Cardiac septum (tissue), 1 donor: ENCODE measurements at regions of chr6 and their contacts with region 1.

Region 1: DNA sequence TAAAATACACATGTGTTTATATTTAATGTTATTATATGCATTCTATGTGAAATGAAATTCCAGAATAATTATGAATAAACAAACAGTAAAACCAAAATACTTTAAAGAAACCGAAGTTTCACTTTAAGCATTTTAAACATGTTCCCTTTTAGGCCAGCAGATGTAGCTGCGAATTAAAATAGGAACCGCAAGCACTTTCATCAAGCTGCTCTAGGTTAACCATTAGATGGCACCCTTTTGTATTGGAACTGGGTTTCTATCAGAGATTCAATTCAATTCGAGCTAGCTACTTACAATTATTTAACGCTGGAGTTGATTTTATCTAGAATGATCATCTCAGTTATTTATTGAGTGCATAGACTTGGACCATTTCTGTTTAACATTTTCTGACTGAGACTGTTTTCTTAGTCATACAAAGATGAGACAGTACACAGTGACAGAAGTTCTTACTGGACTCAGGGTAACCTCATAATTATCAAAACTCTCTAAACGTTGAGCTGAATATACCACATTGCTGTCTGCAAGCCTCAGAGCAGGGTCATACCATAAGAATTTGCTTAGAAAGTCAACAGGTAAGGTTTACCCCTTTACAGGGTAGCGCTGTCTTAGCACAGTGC is 8.5 kb downstream of the TMEM242 start:
- DNase-seq: no peak

Region 2: DNA sequence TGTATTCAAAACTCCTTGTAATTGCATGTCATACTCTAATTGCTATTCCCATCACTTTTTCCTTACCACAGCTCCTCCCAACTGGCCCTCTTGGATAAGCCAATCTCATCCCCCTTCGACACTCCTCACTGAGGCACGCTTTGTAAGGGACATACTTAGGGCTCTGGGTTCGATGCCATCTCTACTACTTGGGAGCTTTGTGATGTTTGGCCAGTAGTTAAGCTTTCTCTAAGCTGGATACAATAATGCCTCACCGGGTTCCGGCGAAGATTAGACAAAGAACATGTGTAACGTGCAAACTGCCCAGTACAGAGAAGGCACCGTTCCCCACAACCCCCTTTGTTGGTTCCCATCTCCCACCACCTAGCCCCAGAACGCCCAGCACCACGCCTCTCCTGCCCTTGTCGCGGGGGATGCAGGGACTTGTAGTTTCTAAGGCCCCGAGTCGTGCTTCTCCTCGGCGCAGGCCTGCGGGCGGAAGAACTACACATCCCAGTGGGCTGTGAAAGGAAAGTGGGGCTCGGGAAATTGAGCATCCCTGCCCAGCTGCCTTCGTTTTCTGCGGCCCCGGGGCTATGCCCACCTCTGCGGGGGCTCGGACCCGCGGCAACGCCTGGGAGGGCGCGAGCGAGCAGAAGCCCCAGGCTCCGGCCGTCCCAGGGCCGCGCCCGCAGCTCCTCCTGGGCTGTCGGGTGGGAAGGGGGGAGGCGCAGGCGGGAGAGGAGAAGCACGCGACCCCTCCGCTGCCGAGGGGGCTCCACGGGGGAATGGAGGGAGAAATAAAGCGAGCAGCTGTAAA is 65.0 kb after region 1 on chr6:
- intact Hi-C with region 1: loop called (anchors 2 kb)
- DNase-seq: peak; percentile 94

Region 3: DNA sequence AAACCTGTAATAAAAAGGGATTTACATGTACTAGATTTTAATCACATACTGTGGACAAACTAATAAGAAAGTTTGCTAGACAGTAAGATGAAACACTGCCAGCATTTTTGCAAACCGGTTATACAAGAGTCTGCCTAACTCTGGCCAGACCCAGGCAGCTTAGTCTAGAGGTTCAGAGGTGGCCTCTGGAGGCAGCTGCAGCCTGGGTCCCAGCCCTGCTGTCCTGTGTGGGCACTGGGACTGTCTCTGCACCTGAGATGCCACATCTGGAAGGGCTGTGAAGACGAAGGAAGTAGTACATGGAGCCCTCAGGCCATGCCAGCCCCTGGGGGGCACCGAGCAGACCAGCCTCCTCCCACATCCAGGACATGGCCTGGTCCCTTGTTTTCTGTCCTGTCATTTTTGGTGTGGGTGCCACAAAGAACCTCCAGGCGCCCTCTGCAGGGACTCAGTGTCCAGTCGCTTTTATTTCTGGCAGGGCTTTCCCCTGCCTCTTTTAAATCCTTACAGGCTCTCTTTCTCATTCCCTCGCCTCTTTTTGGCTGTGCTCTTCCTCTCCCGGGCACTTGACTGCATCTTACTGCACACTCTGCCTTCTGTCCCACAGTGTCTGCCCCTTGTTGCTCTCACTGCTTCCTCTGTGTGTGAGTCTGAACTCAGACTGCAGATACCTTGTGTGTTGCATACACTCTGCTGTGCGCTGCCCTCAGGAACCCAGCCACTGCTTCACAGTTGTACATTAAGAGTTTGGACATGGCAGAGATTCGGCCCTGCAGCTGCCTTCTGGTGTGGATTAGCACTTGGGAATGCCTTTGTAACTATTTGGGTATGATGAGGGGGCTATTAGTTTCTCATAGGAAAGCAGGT is 282.9 kb after region 1 on chr6:
- intact Hi-C with region 1: loop called (anchors 5 kb)
- DNase-seq: no peak

Region 4: DNA sequence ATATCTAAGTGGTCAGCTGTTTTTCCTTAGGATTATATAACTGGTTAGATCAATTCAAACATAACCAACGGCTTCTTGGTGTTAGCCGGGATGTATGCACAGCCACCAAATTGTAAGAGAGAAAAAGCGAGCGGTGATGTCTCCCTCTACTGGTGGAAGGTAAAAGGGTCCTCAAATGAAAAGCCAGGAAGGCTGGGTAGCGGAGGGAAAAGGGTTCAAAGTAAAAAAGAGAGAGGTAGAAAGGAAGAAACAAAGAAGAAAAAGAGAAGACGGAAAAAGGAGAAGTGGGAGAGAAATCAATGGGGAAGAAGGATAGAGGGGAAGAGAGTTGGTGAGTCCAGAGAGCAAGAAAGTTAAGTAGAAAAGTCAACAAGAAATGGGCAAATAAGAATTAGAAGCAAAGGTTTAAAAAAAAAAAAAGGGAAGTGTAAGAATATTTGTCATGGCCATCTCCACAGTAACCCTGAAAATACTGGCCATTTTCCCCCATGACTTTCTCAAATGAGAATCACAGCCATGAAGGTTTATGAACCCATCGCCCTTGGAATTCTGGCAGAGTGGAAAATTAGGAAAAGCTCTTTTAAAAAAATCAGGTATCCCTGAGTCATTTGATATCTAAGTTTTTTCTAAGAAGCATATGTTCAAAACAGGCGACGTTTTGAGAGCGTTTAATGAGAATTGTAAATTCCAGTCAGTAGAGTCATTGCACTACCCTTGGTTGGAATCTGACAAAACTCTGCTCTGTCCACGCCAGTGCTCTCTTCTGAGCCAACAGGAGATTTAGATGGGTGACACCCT is 352.6 kb after region 1 on chr6:
- intact Hi-C with region 1: loop called (anchors 2 kb)
- DNase-seq: peak; percentile 38

Region 5: DNA sequence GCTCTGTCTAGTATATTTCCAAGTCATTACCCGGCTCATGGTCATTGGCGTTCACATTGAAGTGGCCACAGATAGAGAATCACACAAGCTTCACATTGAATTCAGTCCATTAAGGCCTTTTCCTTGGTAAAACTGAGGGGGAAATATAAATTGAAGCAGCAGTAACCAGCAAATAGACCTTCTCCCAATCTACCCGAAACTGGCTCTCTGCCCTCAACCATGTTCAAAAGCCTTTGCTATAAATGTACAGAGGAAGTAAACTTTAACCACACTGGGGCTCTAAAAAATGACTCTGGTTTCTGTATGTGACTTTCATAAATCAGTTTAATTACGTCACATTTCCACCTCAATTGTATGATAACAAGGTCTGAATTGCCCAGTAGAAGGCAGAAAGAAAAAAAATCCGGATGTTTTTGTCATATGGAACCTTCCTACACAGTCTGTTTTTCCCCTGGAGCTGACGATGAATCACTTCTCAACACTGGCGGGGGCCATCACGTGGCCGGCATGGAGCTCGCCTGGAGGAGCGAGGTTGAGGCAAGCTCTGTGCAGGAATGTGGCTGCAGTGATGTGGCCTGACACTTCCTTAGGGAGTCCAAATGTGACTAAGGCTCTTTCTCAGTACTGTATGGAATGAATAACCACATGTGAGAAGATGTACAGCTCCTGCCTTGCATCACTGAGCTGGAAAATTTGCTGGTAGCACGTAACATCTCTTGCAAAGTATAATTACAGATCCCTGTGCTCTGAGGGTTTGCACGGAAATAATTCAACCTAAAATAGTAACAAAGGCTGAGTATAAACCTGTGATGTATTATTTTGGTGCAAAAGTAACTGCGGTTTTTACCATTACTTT is 449.6 kb after region 1 on chr6:
- intact Hi-C with region 1: loop called (anchors 10 kb)
- DNase-seq: peak; percentile 92

Region 6: DNA sequence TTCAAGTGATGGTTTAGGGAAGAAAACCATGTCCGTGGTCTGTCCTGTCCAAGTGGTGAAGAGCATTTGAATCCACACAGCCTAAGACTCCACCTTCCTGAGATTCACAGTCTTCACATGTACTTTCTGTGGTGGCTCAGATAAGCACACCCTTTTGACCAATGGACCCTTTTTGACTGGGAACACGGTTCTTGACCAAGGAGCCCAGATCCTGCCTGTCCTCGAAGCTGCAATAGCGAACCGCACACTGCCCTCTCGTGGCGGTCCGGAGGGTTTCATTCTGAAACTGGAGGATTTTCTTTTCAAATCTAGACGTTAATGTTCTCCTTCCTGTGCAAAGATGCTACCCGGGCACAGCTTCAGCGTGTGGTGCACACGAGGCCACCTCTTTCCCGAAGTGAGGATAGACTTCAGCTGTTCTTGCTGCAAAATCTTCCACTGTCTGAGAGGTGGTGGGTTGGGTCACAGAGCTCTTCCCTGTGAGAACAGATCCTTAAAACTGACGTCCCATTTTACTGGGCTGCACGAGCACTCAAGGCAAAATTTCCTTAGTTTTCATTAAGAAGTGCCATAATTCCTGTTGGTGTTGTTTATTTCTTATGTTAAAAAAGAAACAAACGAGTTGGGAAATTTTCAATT is 757.4 kb after region 1 on chr6:
- intact Hi-C with region 1: loop called (anchors 10 kb)
- DNase-seq: peak; percentile 90